ENCODE measurements at regions of chr14 and their contacts with region 1.

Region 1: GRCh38 chr14:81269100-81269978 is 48.6 kb upstream of the GTF2A1 start:
- DNase-seq: no peak
- H3K4me3 ChIP-seq: no peak overlapping the region
- H3K27ac ChIP-seq: no peak overlapping the region
- H3K4me1 ChIP-seq: peaks cover 0 to 8% (median 2%) of the 10 kb centered on the region in 4 donors
- H3K27me3 ChIP-seq: peaks cover 0 to 5% of the 10 kb centered on the region in 2 donors
- CTCF ChIP-seq: peak; percentile 61 to 71

Region 2: GRCh38 chr14:81350344-81351130 is 81.2 kb after region 1 on chr14:
- intact Hi-C with region 1: no loop called
- DNase-seq: no peak
- H3K4me3 ChIP-seq: no peak overlapping the region
- H3K27ac ChIP-seq: no peak overlapping the region
- H3K4me1 ChIP-seq: no peaks in the 10 kb centered on the region
- H3K27me3 ChIP-seq: no peaks in the 10 kb centered on the region
- CTCF ChIP-seq: no peak

Region 3: DNA sequence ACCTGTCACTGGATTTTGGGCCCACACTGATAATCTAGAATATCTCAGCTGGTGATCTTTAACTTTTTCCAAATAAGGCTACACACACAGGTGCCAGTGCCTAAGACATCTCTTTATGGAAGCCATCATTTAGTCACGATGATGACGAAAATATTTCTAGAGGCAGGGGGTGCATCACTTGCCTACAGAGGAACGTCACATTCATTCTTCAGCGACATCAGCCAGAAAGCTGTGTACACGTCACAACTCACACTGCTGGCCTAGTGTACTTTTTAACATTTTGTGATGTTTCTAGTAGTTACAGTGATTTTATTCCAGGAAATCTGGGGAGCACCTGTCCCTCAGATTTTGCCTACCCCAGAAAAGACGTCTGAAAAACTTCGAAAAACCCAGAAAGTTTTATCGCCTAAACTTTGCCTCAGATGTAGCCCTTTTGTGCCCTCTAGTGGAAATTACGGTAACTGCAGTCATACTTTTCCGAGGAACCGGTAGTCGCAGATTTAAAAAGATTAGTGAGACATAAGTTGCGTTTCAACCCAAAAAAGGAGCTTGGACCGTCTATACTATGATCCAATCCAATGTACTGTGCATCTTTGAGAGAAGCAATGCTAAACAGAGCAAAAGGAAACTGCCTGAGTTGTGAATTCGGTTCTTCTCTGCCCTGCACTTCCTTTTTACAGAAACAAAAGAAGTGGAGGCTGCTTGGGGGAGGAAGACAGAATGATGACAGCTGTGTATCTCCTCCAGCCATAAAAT is 195.1 kb after region 1 on chr14:
- intact Hi-C with region 1: loop called (anchors 5 kb)
- DNase-seq: peak in 1 of 2 donors; percentile 41
- H3K4me3 ChIP-seq: peak overlapping the region; percentile 29 to 47
- H3K27ac ChIP-seq: no peak overlapping the region
- H3K4me1 ChIP-seq: peaks cover 0 to 5% (median 0%) of the 10 kb centered on the region in 4 donors
- H3K27me3 ChIP-seq: no peaks in the 10 kb centered on the region
- CTCF ChIP-seq: peak; percentile 76 to 85